T-cell (primary cell): ENCODE measurements at regions of chr3 and their contacts with region 1.

Region 1: GRCh38 chr3:99833617-99834205 is 16.0 kb downstream of the CMSS1 start:
- DNase-seq: no peak
- ATAC-seq: no peak
- H3K4me3 ChIP-seq: no peak overlapping the region
- H3K4me3 Mint-ChIP-seq: no peak overlapping the region
- H3K27ac ChIP-seq: no peak overlapping the region
- H3K27ac Mint-ChIP-seq: no peak overlapping the region
- H3K4me1 ChIP-seq: no peaks in the 10 kb centered on the region
- H3K4me1 Mint-ChIP-seq: peaks cover 0 to 10% (median 4%) of the 10 kb centered on the region in 3 donors
- H3K27me3 ChIP-seq: no peaks in the 10 kb centered on the region
- H3K27me3 Mint-ChIP-seq: no peaks in the 10 kb centered on the region

Region 2: DNA sequence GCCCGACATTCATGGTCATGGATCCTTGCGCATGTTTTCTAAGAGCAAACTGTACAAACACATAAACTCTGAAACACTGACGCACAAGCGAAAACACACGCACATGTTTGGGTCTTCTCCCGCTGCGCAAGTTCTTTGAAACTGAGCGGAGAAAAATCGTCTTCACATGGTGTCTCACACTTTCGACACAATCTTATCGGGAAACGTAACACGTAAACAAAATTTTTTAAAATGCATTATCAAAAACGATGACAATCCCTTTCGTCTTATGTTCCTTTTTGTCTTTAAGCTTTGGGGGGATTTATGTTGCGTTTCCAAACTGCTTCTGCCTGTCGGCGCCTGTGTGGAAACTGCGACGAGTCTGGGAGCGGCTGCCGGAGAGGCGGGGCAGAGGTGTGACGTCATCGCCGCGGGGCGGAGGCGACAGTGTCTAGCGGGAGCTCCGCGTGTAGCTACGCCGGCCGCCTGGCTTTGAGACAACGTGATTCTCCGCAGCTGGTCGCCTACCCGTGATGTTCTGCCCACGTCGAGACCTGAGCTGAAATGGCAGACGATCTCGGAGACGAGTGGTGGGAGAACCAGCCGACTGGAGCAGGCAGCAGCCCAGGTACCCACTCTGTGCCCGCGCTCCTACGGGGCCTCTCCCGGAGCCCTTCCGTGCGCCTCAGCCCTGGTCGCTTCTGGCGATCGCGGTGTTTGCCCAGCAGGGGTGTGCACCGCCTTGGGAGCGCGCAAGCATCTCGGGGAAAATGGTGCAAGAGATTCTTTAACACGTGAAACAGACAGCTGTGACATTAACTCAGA is 16.1 kb before region 1 on chr3 and contains the start of gene CMSS1:
- CTCF ChIA-PET with region 1: interaction called, 9 to 18 read pairs
- POLR2A ChIA-PET with region 1: interaction called, 4 read pairs
- DNase-seq: peak; percentile 85 to 99 (median 96)
- ATAC-seq: peak; percentile 87 to 94 (median 94)
- H3K4me3 ChIP-seq: peak within 1 kb of the TSS; percentile 69 to 88
- H3K4me3 Mint-ChIP-seq: peak within 1 kb of the TSS; percentile 86 to 98 (median 96)
- H3K27ac ChIP-seq: peak within 1 kb of the TSS; percentile 78
- H3K27ac Mint-ChIP-seq: peak within 1 kb of the TSS; percentile 99
- H3K4me1 ChIP-seq: peaks cover 5 to 15% of the 10 kb centered on the region in 2 experiments
- H3K4me1 Mint-ChIP-seq: peaks cover 41 to 50% (median 48%) of the 10 kb centered on the region in 3 donors
- H3K27me3 ChIP-seq: no peaks in the 10 kb centered on the region
- H3K27me3 Mint-ChIP-seq: no peaks in the 10 kb centered on the region
- total RNA-seq, gene CMSS1: 16.2 to 22.0 (median 18.3) TPM

Region 3: DNA sequence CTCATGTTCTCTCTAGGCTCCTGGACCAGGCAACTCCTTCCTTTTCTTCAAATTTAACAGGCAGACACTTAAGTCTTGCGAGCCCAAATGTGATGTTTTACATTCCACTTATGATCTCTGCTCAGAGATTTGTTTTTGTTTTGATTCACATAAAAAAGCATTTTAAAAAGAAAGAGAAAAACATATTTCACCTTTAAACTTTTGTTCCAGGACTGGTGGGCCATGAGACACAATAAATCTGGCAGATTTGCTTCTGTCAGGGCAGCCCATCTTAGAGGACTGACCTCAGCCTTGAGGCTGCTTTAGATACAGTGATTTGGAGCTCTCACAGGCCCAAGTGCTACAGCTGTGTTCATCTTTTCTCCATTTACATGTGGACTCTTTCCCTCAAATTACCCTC is 35.9 kb after region 1 on chr3:
- CTCF ChIA-PET with region 1: interaction called in 1 of 2 experiments, 12 read pairs
- POLR2A ChIA-PET with region 1: interaction called in 1 of 2 experiments, 6 read pairs
- DNase-seq: no peak
- ATAC-seq: no peak
- H3K4me3 ChIP-seq: no peak overlapping the region
- H3K4me3 Mint-ChIP-seq: no peak overlapping the region
- H3K27ac ChIP-seq: no peak overlapping the region
- H3K27ac Mint-ChIP-seq: no peak overlapping the region
- H3K4me1 ChIP-seq: peaks cover 0 to 15% of the 10 kb centered on the region in 2 experiments
- H3K4me1 Mint-ChIP-seq: peaks cover 30 to 37% (median 36%) of the 10 kb centered on the region in 3 donors
- H3K27me3 ChIP-seq: peaks cover 0 to 2% of the 10 kb centered on the region in 2 experiments
- H3K27me3 Mint-ChIP-seq: no peaks in the 10 kb centered on the region

Region 4: DNA sequence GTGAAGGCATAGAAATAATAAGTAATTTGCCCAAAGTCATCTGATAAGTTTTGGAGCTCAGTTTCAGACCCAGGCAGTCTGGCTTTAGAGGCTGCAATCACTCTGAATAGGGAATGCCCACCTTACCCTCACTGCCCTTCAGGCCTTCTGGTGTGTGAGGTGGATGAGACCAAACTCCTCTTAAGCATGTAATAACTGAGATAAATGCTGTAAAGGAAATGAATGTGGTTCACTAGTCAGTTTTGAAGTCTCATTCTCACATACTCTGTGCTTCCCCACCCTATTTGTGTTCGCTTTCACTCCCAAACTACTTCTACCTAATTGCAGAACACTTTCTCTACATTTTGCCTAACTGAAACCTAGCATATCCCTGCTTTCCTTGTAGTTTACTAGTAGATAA is 136.5 kb after region 1 on chr3:
- CTCF ChIA-PET with region 1: no interaction called
- POLR2A ChIA-PET with region 1: no interaction called
- DNase-seq: no peak
- ATAC-seq: no peak
- H3K4me3 ChIP-seq: no peak overlapping the region
- H3K4me3 Mint-ChIP-seq: no peak overlapping the region
- H3K27ac ChIP-seq: no peak overlapping the region
- H3K27ac Mint-ChIP-seq: no peak overlapping the region
- H3K4me1 ChIP-seq: peaks cover 0 to 4% of the 10 kb centered on the region in 2 experiments
- H3K4me1 Mint-ChIP-seq: peaks cover 7 to 24% (median 15%) of the 10 kb centered on the region in 3 donors
- H3K27me3 ChIP-seq: no peaks in the 10 kb centered on the region
- H3K27me3 Mint-ChIP-seq: no peaks in the 10 kb centered on the region

Region 5: DNA sequence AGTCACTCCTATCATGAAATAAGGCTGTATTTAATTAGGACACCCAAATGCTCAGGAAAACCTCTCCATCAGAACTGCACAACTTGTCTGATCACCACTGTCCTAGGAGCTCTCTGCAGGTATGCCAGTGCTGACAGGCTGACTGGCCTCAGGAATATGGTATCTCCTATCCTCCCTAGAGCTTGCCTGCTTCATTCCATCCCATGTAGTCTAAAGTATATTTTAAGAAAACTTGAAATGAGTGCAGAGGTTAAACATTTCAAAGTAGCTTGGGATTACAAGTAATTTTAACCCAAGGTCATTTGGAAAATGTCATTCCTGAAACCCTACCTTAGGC is 256.9 kb after region 1 on chr3:
- CTCF ChIA-PET with region 1: no interaction called
- POLR2A ChIA-PET with region 1: no interaction called
- DNase-seq: no peak
- ATAC-seq: no peak
- H3K4me3 ChIP-seq: no peak overlapping the region
- H3K4me3 Mint-ChIP-seq: no peak overlapping the region
- H3K27ac ChIP-seq: no peak overlapping the region
- H3K27ac Mint-ChIP-seq: no peak overlapping the region
- H3K4me1 ChIP-seq: no peaks in the 10 kb centered on the region
- H3K4me1 Mint-ChIP-seq: peaks cover 6 to 8% (median 7%) of the 10 kb centered on the region in 3 donors
- H3K27me3 ChIP-seq: no peaks in the 10 kb centered on the region
- H3K27me3 Mint-ChIP-seq: no peaks in the 10 kb centered on the region

Region 6: DNA sequence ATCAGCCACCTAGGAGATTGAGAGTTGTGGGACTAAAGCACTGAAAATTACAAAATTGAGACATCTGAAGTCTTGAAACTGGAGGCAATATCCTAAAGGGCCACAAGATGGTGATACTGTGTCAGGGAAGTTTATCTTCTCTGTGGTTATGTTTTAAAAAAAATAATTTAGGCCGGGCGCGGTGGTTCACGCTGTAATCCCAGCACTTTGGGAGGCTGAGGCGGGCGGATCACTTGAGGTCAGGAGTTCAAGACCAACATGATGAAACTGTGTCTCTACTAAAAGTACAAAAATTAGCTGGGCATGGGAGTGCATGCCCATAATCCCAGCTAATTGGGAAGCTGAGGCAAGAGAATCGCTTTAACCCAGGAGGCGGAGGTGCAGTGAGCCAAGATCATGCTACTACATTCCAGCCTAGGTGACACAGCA is 482.9 kb after region 1 on chr3:
- CTCF ChIA-PET with region 1: no interaction called
- POLR2A ChIA-PET with region 1: interaction called in 1 of 2 experiments, 11 read pairs
- DNase-seq: peak in 20 of 35 experiments; percentile 5 to 75 (median 22)
- ATAC-seq: peak; percentile 56 to 80 (median 67)
- H3K4me3 ChIP-seq: no peak overlapping the region
- H3K4me3 Mint-ChIP-seq: peak overlapping the region in 2 of 3 donors; percentile 13 to 21
- H3K27ac ChIP-seq: no peak overlapping the region
- H3K27ac Mint-ChIP-seq: no peak overlapping the region
- H3K4me1 ChIP-seq: peaks cover 0 to 3% of the 10 kb centered on the region in 2 experiments
- H3K4me1 Mint-ChIP-seq: peaks cover 8 to 14% (median 11%) of the 10 kb centered on the region in 3 donors
- H3K27me3 ChIP-seq: no peaks in the 10 kb centered on the region
- H3K27me3 Mint-ChIP-seq: no peaks in the 10 kb centered on the region

Region 7: GRCh38 chr3:101377796-101378195 is 1544.1 kb after region 1 on chr3:
- CTCF ChIA-PET with region 1: no interaction called
- POLR2A ChIA-PET with region 1: interaction called in 1 of 2 experiments, 12 read pairs
- DNase-seq: no peak
- ATAC-seq: no peak
- H3K4me3 ChIP-seq: no peak overlapping the region
- H3K4me3 Mint-ChIP-seq: no peak overlapping the region
- H3K27ac ChIP-seq: no peak overlapping the region
- H3K27ac Mint-ChIP-seq: peak overlapping the region; percentile 34 to 35
- H3K4me1 ChIP-seq: peaks cover 3 to 10% of the 10 kb centered on the region in 2 experiments
- H3K4me1 Mint-ChIP-seq: peaks cover 60 to 80% (median 61%) of the 10 kb centered on the region in 3 donors
- H3K27me3 ChIP-seq: no peaks in the 10 kb centered on the region
- H3K27me3 Mint-ChIP-seq: no peaks in the 10 kb centered on the region